Naive thymus-derived CD4-positive, alpha-beta T cell (primary cell): ENCODE measurements at regions of chr9 and their contacts with region 1.

Region 1: DNA sequence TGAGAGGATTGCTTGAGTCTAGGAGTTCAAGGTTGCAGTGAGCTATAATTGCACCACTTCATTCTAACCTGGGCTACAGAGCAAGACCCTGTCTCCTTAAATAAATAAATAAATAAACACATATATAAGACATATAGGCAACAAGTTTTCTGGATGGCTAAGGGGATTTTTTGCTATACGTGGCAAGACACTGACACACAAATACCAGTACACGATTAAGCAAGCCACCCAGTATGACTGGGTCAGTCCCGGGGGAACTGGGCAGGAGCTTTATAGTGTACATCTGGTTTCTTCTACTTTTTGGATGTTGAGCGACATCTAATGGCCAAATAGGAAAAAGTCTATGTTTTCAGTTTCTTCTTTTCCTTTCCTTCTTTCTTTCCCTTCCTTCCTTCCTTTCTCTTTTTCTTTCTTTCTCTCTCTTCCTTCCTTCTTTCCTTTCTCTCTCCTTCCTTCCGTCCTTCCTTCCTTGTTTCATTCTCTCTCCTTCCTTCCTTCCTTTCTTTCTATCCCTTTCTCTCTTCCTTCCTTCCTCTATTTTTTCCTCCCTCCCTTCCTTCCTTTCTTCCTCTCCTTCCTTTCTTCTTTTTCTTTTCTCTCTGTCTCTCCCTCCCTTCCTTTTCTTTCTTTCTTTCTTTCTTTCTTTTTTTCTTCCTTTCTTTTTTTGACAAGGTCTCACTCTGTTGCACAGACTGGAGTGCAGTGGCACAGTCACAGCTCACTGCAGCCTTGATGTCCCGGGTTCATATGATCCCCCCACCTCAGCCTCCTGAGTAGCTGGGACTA is 47.0 kb upstream of the PLIN2 start:
- DNase-seq: peak; percentile 11 to 51 (median 37)
- ATAC-seq: peak; percentile 91
- H3K4me3 ChIP-seq: no peak overlapping the region
- H3K4me3 Mint-ChIP-seq: peak overlapping the region in 3 of 10 donors; percentile 14 to 70 (median 63)
- H3K27ac ChIP-seq: no peak overlapping the region
- H3K27ac Mint-ChIP-seq: peak overlapping the region in 5 of 9 donors; percentile 52 to 84 (median 62)
- H3K4me1 ChIP-seq: peaks cover 5 to 16% of the 10 kb centered on the region in 2 donors
- H3K4me1 Mint-ChIP-seq: peaks cover 25 to 39% (median 31%) of the 10 kb centered on the region in 7 donors
- H3K27me3 ChIP-seq: no peaks in the 10 kb centered on the region
- H3K27me3 Mint-ChIP-seq: no peaks in the 10 kb centered on the region

Region 2: GRCh38 chr9:18442629-18443491 is 731.5 kb before region 1 on chr9:
- CTCF ChIA-PET with region 1: no interaction called
- POLR2A ChIA-PET with region 1: no interaction called
- intact Hi-C with region 1: loop called in 1 of 2 experiments (anchors 5 kb)
- DNase-seq: peak in 5 of 9 donors; percentile 12 to 47 (median 25)
- ATAC-seq: peak; percentile 64
- H3K4me3 ChIP-seq: no peak overlapping the region
- H3K4me3 Mint-ChIP-seq: no peak overlapping the region
- H3K27ac ChIP-seq: no peak overlapping the region
- H3K27ac Mint-ChIP-seq: no peak overlapping the region
- H3K4me1 ChIP-seq: no peaks in the 10 kb centered on the region
- H3K4me1 Mint-ChIP-seq: peaks cover 0 to 5% (median 0%) of the 10 kb centered on the region in 7 donors
- H3K27me3 ChIP-seq: no peaks in the 10 kb centered on the region
- H3K27me3 Mint-ChIP-seq: peaks cover 12 to 28% (median 16%) of the 10 kb centered on the region in 5 donors

Region 3: DNA sequence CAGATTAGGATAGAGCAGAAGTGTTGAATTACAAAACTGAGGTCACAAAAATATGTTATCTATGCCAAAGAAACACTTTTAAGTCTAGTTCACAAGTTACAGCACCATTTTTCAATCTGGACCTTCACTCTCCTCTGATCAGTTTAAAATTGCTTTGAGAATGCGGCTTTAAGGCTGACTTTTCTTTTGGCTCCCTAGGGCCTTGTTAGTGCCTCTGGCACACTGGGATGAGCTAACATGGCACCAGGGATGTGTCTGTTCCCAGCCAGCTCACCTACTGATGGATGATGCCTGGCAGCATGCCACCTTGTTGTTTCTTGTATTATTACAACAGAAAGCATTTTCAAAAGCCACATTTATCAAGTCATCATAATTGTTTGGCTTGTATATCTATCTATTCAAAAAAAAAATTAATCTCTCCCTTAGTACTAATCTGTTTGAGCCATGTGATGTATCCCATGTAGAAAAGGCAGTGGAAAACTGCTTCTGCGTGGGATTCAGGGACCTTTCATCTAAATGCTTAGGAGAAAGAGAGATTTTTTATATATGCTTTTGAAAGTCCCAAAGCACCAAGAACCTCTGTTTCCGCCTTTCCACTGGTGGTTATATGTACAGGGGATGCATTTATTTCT is 653.8 kb before region 1 on chr9:
- CTCF ChIA-PET with region 1: no interaction called
- POLR2A ChIA-PET with region 1: no interaction called
- intact Hi-C with region 1: no loop called
- DNase-seq: no peak
- ATAC-seq: no peak
- H3K4me3 ChIP-seq: no peak overlapping the region
- H3K4me3 Mint-ChIP-seq: no peak overlapping the region
- H3K27ac ChIP-seq: no peak overlapping the region
- H3K27ac Mint-ChIP-seq: no peak overlapping the region
- H3K4me1 ChIP-seq: no peaks in the 10 kb centered on the region
- H3K4me1 Mint-ChIP-seq: no peaks in the 10 kb centered on the region
- H3K27me3 ChIP-seq: no peaks in the 10 kb centered on the region
- H3K27me3 Mint-ChIP-seq: peaks cover 0 to 7% (median 0%) of the 10 kb centered on the region in 5 donors

Region 4: GRCh38 chr9:19048966-19049916 is 125.1 kb before region 1 on chr9 and contains the start of gene RRAGA:
- CTCF ChIA-PET with region 1: interaction called, 19 read pairs
- POLR2A ChIA-PET with region 1: interaction called, 7 read pairs
- intact Hi-C with region 1: loop called (anchors 1 kb)
- DNase-seq: peak; percentile 90 to 96 (median 95)
- ATAC-seq: peak; percentile 95
- H3K4me3 ChIP-seq: peak within 1 kb of the TSS; percentile 88
- H3K4me3 Mint-ChIP-seq: peak within 1 kb of the TSS; percentile 92 to 99 (median 95)
- H3K27ac ChIP-seq: peak within 1 kb of the TSS; percentile 85
- H3K27ac Mint-ChIP-seq: peak within 1 kb of the TSS; percentile 97 to 100 (median 98)
- H3K4me1 ChIP-seq: peaks cover 20% of the 10 kb centered on the region in 2 donors
- H3K4me1 Mint-ChIP-seq: peaks cover 6 to 50% (median 42%) of the 10 kb centered on the region in 7 donors
- H3K27me3 ChIP-seq: no peaks in the 10 kb centered on the region
- H3K27me3 Mint-ChIP-seq: peaks cover 0 to 2% (median 0%) of the 10 kb centered on the region in 5 donors
- total RNA-seq, gene RRAGA: 25.9 to 53.6 (median 51.9) TPM

Region 5: GRCh38 chr9:19127881-19128500 is 46.3 kb before region 1 on chr9:
- CTCF ChIA-PET with region 1: interaction called, 5 read pairs
- POLR2A ChIA-PET with region 1: interaction called, 5 read pairs
- intact Hi-C with region 1: loop called (anchors 1 kb)
- DNase-seq: peak in 7 of 9 donors; percentile 12 to 44 (median 32)
- ATAC-seq: peak; percentile 44
- H3K4me3 ChIP-seq: peak overlapping the region; percentile 78
- H3K4me3 Mint-ChIP-seq: peak overlapping the region; percentile 80 to 96 (median 93)
- H3K27ac ChIP-seq: peak overlapping the region; percentile 94
- H3K27ac Mint-ChIP-seq: peak overlapping the region; percentile 60 to 97 (median 95)
- H3K4me1 ChIP-seq: peaks cover 24 to 26% of the 10 kb centered on the region in 2 donors
- H3K4me1 Mint-ChIP-seq: peaks cover 18 to 62% (median 48%) of the 10 kb centered on the region in 7 donors
- H3K27me3 ChIP-seq: no peaks in the 10 kb centered on the region
- H3K27me3 Mint-ChIP-seq: no peaks in the 10 kb centered on the region

Region 6: DNA sequence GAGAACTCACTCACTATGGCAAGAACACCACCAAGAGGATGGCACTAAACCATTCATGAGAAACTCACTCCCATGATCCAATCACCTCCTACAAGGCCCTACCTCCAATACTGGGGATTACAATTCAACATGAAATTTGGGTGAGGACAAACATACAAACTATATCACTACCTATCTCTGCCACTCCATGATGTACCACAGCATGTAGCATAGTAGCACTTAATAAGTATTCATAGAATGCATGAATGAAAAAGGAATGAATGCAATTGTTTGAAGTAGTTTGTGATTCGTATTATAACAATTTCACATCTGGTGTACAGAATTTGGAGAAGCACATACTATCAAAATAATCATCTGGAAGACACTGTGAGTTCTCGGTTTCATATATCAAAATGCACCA is 642.4 kb after region 1 on chr9:
- CTCF ChIA-PET with region 1: no interaction called
- POLR2A ChIA-PET with region 1: no interaction called
- intact Hi-C with region 1: no loop called
- DNase-seq: no peak
- ATAC-seq: no peak
- H3K4me3 ChIP-seq: no peak overlapping the region
- H3K4me3 Mint-ChIP-seq: no peak overlapping the region
- H3K27ac ChIP-seq: no peak overlapping the region
- H3K27ac Mint-ChIP-seq: no peak overlapping the region
- H3K4me1 ChIP-seq: no peaks in the 10 kb centered on the region
- H3K4me1 Mint-ChIP-seq: no peaks in the 10 kb centered on the region
- H3K27me3 ChIP-seq: no peaks in the 10 kb centered on the region
- H3K27me3 Mint-ChIP-seq: peaks cover 2 to 49% (median 23%) of the 10 kb centered on the region in 5 donors